Activated CD4-positive, alpha-beta T cell treated with anti-CD3 and anti-CD28 coated beads for 36 hours (primary cell): ENCODE measurements at regions of chr3 and their contacts with region 1.

Region 1: DNA sequence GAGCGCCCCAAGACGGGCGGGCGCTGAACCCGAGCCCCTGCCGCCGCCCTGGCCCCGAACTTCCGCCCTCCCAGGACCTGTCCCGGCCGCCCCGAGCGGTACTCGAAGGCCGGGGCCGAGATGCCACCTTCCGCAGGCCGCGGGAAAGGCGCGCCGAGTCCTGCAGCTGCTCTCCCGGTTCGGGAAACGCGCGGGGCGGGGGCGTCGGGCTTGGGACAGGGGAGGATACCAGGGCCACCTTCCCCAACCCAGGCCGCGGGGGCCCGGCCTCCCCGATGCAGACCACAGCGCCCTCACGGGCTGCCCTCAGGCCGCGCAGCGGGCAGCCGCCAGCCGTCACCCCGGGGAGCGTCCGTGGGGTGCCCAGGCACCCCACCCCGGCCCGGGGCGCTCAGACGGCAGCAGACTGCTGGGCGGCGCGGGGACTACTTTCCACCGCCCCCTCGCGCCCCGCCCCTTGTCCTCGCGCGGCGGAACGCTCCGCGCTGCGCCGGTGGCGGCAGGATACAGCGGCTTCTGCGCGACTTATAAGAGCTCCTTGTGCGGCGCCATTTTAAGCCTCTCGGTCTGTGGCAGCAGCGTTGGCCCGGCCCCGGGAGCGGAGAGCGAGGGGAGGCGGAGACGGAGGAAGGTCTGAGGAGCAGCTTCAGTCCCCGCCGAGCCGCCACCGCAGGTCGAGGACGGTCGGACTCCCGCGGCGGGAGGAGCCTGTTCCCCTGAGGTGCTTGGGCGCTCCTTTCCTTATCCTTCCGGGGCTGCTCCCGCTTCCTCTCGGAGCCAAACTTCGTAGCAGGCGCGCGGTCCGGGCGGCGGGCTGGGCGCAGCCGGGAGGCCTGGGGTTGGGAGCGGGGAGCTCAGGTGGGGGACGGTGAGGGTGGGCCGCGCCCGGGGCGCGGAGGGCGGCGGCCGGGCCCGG is at the start of gene CTNNB1:
- DNase-seq: peak; percentile 94
- ATAC-seq: peak; percentile 86
- H3K4me3 Mint-ChIP-seq: peak within 1 kb of the TSS; percentile 91
- H3K27ac Mint-ChIP-seq: peak within 1 kb of the TSS; percentile 88
- H3K4me1 Mint-ChIP-seq: peaks cover 36% of the 10 kb centered on the region
- H3K27me3 Mint-ChIP-seq: peaks cover 8% of the 10 kb centered on the region
- total RNA-seq, gene CTNNB1: 114 to 158 TPM

Region 2: DNA sequence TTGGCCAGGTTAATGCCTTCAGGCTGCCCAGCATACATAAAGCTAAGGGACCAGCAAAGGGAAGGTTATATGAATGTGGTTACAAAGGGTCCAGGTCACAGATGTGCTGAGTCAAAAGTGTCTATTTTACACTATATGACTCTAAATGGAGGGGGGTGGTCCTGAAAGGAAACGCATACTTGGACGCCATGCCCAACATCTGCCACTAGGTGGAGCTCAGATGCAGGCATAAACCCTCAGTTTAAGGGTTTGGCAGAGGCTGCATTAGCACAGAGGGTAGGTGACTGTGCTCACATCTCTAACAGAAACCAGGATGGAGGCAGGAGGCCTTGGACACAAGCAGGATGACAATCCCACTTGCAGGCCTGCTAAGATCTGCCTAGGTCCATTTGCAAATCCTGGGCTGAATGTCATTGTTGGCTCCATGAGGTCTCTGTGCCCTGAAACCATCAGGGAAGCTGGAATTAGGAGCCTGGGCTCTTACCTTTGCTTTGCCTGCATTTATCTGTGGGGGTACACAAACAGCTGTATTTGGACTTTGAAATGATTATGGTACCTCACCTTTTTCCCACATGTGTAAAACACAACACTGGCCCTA is 618.6 kb before region 1 on chr3:
- CTCF ChIA-PET with region 1: interaction called, 3 read pairs
- POLR2A ChIA-PET with region 1: no interaction called
- intact Hi-C with region 1: loop called in 1 of 2 experiments (anchors 5 kb)
- DNase-seq: peak; percentile 79
- ATAC-seq: peak; percentile 88
- H3K4me3 Mint-ChIP-seq: no peak overlapping the region
- H3K27ac Mint-ChIP-seq: no peak overlapping the region
- H3K4me1 Mint-ChIP-seq: peaks cover 2% of the 10 kb centered on the region
- H3K27me3 Mint-ChIP-seq: peaks cover 8% of the 10 kb centered on the region

Region 3: GRCh38 chr3:41117398-41117870 is 81.8 kb before region 1 on chr3:
- CTCF ChIA-PET with region 1: no interaction called
- POLR2A ChIA-PET with region 1: interaction called, 9 read pairs
- intact Hi-C with region 1: loop called (anchors 1 to 5 kb)
- DNase-seq: peak; percentile 94
- ATAC-seq: peak; percentile 96
- H3K4me3 Mint-ChIP-seq: peak overlapping the region; percentile 2
- H3K27ac Mint-ChIP-seq: peak overlapping the region; percentile 86
- H3K4me1 Mint-ChIP-seq: peaks cover 28% of the 10 kb centered on the region
- H3K27me3 Mint-ChIP-seq: no peaks in the 10 kb centered on the region

Region 4: DNA sequence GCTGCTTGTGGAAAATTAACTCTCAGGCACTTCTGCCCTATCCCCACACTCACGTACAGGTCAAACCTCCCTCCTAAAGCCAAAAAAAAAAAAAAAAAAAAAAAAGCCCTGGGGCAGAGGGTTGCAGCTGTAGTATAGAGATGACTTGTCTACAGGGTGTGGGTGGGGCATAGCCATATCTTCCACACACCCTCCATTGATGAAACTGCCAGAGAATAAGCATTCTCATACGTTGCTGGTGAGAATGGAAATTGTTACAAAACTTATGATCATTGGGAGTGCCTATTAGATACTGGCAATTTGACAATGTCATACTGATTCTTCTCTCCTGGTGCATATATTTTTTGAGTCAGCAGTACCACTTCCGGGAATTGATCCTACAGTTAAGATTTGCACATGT is 10.9 kb before region 1 on chr3:
- CTCF ChIA-PET with region 1: interaction called, 4 read pairs
- POLR2A ChIA-PET with region 1: interaction called, 6 read pairs
- intact Hi-C with region 1: loop called in 1 of 2 experiments (anchors 1 kb)
- DNase-seq: peak; percentile 64
- ATAC-seq: peak; percentile 97
- H3K4me3 Mint-ChIP-seq: no peak overlapping the region
- H3K27ac Mint-ChIP-seq: peak overlapping the region; percentile 34
- H3K4me1 Mint-ChIP-seq: peaks cover 27% of the 10 kb centered on the region
- H3K27me3 Mint-ChIP-seq: peaks cover 6% of the 10 kb centered on the region

Region 5: DNA sequence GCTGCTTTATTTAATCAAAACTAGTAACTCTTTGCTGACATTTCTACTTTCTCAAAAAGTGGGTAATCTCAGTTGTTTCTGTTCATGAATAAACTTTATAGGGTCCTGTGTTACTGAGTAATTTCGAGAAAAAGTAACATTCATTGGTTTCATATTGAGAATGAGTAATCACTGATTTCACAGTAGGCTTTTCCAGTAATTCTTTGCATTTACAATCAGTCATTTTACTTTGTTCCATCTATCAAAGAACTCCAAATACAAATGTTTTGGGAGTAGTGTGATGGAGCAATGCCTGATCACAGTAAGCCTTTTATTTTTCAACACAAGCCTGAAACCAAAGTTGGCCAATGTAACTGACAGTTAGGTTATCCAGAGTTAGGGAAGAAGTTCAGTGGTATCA is 409.1 kb after region 1 on chr3:
- CTCF ChIA-PET with region 1: no interaction called
- POLR2A ChIA-PET with region 1: no interaction called
- intact Hi-C with region 1: loop called in 1 of 2 experiments (anchors 5 kb)
- DNase-seq: no peak
- ATAC-seq: peak; percentile 84
- H3K4me3 Mint-ChIP-seq: peak overlapping the region; percentile 23
- H3K27ac Mint-ChIP-seq: peak overlapping the region; percentile 73
- H3K4me1 Mint-ChIP-seq: peaks cover 18% of the 10 kb centered on the region
- H3K27me3 Mint-ChIP-seq: no peaks in the 10 kb centered on the region

Region 6: DNA sequence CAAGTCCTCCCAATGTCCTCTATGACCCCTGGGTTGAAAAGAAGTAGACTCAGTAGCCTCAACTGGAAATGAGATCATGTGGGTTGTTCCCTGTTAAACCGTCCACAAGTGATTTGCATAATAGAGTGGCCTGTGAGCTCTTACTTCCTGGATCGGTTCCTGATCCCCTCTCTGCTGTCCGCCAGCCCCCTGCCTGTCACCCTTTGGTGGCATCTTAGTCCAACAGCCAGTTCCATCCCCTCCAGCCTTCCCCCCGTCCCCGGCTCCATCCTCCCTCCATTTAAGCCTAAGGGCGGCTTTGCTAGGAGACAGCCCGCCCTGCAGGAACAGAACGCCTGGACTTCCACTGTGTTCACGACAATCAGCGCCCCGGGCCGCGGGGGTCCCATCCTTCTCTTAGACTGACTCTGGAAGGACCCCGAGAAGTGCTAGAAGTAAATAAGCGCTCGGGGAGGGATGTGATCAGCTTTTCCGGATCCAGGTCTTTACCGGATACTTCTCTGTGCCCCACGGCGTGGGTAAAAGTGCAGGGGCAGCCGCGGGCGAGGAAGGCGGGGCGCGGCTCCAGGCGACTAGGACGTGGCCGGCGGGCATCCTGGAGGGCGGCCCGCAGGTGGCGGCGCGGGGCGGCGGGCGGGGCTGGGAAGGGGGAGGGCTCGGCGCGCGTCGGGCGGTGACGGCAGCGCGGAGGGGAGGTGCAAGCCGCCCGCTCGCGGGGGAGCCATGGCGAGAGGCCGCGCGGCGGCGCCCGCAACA is 813.9 kb after region 1 on chr3:
- CTCF ChIA-PET with region 1: no interaction called
- POLR2A ChIA-PET with region 1: no interaction called
- intact Hi-C with region 1: loop called in 1 of 2 experiments (anchors 1 kb)
- DNase-seq: peak; percentile 88
- ATAC-seq: peak; percentile 75
- H3K4me3 Mint-ChIP-seq: peak overlapping the region; percentile 90
- H3K27ac Mint-ChIP-seq: peak overlapping the region; percentile 92
- H3K4me1 Mint-ChIP-seq: peaks cover 46% of the 10 kb centered on the region
- H3K27me3 Mint-ChIP-seq: no peaks in the 10 kb centered on the region

Region 7: GRCh38 chr3:42090973-42091731 is 891.9 kb after region 1 on chr3 and contains the start of gene TRAK1:
- CTCF ChIA-PET with region 1: no interaction called
- POLR2A ChIA-PET with region 1: no interaction called
- intact Hi-C with region 1: loop called in 1 of 2 experiments (anchors 10 kb)
- DNase-seq: no peak
- ATAC-seq: no peak
- H3K4me3 Mint-ChIP-seq: no peak within 1 kb of the TSS
- H3K27ac Mint-ChIP-seq: no peak within 1 kb of the TSS
- H3K4me1 Mint-ChIP-seq: peaks cover 44% of the 10 kb centered on the region
- H3K27me3 Mint-ChIP-seq: no peaks in the 10 kb centered on the region
- total RNA-seq, gene TRAK1: 22.4 to 23.6 TPM